Panc1 (cell line): ENCODE measurements at regions of chr12 and their contacts with region 1.

Region 1: DNA sequence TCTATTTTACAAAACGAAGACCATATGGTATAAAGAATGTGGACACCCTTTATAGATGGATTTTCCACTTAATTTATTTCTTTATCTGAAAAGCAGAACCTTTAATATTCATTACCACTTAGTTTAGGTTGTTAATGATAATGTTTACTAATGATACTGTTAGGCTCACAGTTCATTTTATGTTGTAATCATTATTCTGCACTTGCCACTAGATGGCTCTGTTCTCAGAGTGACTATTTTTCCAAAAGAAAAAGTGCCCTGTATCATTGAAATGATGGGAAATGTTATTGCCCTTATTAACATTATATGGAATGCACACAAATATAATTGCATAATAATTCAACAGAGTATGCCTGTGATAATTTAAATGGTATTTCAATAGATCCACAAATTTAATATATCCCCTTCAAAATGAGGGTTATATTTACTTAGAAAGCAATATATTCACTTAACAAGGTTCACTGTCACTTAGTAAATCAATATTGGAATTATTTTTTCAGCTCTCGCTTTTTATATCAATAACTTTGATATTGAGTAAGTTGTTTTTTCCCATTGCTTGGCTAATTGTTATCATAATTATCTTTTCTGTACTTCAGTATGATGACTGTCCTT is 95.7 kb downstream of the PDE3A start:
- DNase-seq: no peak
- ATAC-seq: no peak
- H3K4me3 ChIP-seq: no peak overlapping the region
- H3K27ac ChIP-seq: no peak overlapping the region
- H3K4me1 ChIP-seq: no peaks in the 10 kb centered on the region
- H3K27me3 ChIP-seq: no peaks in the 10 kb centered on the region
- CTCF ChIP-seq: peak; percentile 52; the same call in 1 of the 2 replicates

Region 2: DNA sequence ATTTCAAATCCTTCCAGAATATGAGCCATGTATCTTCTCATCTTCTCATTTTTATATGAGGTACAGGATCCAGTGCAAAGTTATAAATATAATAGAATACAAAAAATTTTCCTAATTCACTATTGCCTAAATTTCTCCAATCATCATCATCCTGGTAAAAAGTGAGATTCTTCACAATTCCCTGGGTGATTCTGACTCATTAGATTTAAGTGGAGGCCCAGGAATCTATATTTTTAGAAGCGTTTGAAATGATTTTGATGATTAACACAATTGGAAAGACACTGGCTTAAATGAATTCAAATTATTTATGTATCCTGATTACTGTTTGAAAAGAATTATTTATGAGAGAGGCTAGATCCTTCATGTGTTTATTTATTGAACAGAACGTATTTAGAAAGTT is 476.0 kb before region 1 on chr12:
- CTCF ChIA-PET with region 1: no interaction called
- POLR2A ChIA-PET with region 1: interaction called, 14 read pairs
- in situ Hi-C with region 1: no loop called
- intact Hi-C with region 1: no loop called
- DNase-seq: no peak
- ATAC-seq: no peak
- H3K4me3 ChIP-seq: no peak overlapping the region
- H3K27ac ChIP-seq: no peak overlapping the region
- H3K4me1 ChIP-seq: no peaks in the 10 kb centered on the region
- H3K27me3 ChIP-seq: no peaks in the 10 kb centered on the region
- CTCF ChIP-seq: no peak

Region 3: DNA sequence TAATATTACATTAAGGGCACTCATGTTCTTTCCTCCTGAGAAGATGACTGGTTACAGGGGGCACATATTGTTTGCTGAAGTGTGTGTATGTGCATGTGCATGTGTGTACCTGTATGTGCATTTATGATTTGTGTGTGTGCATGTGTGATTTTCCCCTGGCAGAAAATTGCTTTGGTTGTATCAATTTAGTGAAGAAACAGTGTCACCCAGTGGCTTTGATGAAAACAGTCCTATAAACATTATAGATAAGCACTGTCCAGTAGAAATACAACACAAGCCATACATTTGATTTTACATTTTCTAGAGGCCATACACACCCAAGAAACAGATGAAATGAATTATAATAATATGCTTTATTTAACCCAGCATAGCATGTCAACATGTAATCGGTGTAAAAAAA is 87.0 kb before region 1 on chr12:
- CTCF ChIA-PET with region 1: no interaction called
- POLR2A ChIA-PET with region 1: no interaction called
- in situ Hi-C with region 1: no loop called
- intact Hi-C with region 1: no loop called
- DNase-seq: no peak
- ATAC-seq: no peak
- H3K4me3 ChIP-seq: no peak overlapping the region
- H3K27ac ChIP-seq: no peak overlapping the region
- H3K4me1 ChIP-seq: no peaks in the 10 kb centered on the region
- H3K27me3 ChIP-seq: no peaks in the 10 kb centered on the region
- CTCF ChIP-seq: peak; percentile 23; the same call in 1 of the 2 replicates

Region 4: DNA sequence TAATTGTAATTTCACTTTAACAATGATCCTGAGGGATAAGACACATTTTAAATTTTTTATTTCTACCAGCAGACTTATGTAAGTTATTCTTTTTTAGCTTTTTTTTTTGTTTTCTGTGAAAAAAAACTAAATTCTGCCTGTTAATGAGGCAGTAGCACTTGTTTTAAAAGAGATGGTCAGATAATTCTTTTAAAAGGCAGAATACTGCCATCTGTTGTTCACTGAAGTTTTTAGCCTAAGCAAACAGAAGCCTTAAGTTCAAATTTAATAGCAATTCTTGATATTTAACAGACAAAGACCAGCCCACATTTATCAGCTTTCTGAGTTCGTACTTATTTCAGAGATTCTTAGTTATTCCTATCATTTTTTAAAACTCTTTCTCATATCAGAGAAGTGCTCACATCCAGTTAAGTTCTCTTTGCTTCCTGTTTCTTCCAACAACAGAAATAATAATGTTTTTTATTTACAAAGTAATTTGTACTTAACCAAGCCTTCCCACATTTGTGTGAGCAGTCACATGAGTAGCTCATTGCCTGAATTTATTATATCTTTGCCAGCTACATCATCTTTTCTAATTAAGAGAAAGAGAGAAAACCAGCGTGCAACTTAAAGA is 137.8 kb after region 1 on chr12:
- CTCF ChIA-PET with region 1: no interaction called
- POLR2A ChIA-PET with region 1: no interaction called
- in situ Hi-C with region 1: no loop called
- intact Hi-C with region 1: loop called (anchors 5 kb)
- DNase-seq: no peak
- ATAC-seq: no peak
- H3K4me3 ChIP-seq: no peak overlapping the region
- H3K27ac ChIP-seq: no peak overlapping the region
- H3K4me1 ChIP-seq: no peaks in the 10 kb centered on the region
- H3K27me3 ChIP-seq: no peaks in the 10 kb centered on the region
- CTCF ChIP-seq: peak; percentile 30; the same call in 1 of the 2 replicates